ENCODE measurements at regions of chr12 and their contacts with region 1.

Region 1: GRCh38 chr12:32312049-32312670 is 87.2 kb upstream of the FGD4 start:
- DNase-seq: no peak
- ATAC-seq: peak; percentile 61
- H3K4me3 Mint-ChIP-seq: no peak overlapping the region
- H3K27ac Mint-ChIP-seq: no peak overlapping the region
- H3K4me1 Mint-ChIP-seq: peaks cover 6% of the 10 kb centered on the region
- H3K27me3 Mint-ChIP-seq: no peaks in the 10 kb centered on the region

Region 2: DNA sequence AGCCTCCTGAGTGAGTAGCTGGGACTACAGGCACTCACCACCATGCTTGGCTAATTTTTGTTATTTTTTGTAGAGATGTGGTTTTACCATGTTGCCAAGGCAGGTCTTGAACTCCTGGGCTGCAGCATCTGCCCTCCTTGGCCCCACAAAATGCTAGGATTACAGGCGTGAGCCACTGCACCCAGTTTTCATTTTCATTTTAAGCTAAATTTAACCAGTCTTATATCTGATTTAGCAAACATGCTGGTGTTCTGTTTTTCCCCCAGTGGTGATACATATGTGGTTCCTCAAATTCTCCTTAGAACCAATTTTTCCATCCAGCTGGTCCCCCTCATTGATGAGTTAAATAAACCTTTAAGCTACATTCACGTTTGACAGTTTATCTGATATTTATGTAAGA is 249.3 kb before region 1 on chr12:
- CTCF ChIA-PET with region 1: interaction called, 15 read pairs
- POLR2A ChIA-PET with region 1: no interaction called
- DNase-seq: no peak
- ATAC-seq: no peak
- H3K4me3 Mint-ChIP-seq: no peak overlapping the region
- H3K27ac Mint-ChIP-seq: no peak overlapping the region
- H3K4me1 Mint-ChIP-seq: peaks cover 14% of the 10 kb centered on the region
- H3K27me3 Mint-ChIP-seq: peaks cover 2% of the 10 kb centered on the region